ENCODE measurements at regions of chr14 and their contacts with region 1.

Region 1: DNA sequence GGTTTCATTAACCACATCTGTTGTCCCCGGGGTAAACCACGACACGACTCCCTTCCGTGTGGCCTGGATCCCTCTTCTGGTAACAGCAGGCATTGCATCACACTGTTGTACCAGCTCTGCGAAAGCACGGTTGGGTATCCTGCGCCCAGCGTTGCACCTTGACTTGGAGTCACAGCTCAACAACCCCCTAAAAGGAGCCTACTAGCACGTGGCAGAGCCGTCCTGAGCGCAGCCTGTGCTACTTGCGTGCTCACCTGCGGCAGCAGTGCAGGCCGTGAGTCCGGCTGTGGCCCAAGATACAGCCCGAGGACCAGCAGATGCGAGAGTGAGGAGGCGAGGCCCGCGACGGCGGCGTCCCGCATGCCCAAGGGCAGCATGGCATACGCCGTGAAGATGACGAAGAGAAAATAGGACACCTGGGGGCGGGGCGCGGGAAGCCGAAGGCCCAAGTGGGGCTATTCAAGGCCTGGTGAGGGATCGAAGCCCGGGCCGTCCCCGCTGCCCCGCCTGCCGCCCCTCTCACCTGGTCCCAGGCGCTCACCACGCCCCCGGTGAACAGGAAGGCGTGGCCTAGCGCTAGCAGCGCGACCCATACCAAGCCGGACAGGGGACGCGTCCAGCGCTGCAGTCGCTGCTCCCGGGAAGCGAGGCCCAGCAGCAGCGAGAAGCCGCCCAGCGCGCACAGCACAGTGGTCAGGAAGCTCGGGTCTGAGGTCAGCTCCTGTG is 2.4 kb downstream of the ADCY4 start:
- DNase-seq: peak; percentile 82
- H3K4me3 Mint-ChIP-seq: peak overlapping the region; percentile 66
- H3K27ac Mint-ChIP-seq: peak overlapping the region; percentile 3
- H3K4me1 Mint-ChIP-seq: peaks cover 36% of the 10 kb centered on the region
- H3K27me3 Mint-ChIP-seq: peaks cover 27% of the 10 kb centered on the region

Region 2: GRCh38 chr14:24207104-24207551 is 125.3 kb before region 1 on chr14:
- intact Hi-C with region 1: no loop called
- DNase-seq: no peak
- H3K4me3 Mint-ChIP-seq: no peak overlapping the region
- H3K27ac Mint-ChIP-seq: peak overlapping the region; percentile 14
- H3K4me1 Mint-ChIP-seq: peaks cover 17% of the 10 kb centered on the region
- H3K27me3 Mint-ChIP-seq: no peaks in the 10 kb centered on the region

Region 3: DNA sequence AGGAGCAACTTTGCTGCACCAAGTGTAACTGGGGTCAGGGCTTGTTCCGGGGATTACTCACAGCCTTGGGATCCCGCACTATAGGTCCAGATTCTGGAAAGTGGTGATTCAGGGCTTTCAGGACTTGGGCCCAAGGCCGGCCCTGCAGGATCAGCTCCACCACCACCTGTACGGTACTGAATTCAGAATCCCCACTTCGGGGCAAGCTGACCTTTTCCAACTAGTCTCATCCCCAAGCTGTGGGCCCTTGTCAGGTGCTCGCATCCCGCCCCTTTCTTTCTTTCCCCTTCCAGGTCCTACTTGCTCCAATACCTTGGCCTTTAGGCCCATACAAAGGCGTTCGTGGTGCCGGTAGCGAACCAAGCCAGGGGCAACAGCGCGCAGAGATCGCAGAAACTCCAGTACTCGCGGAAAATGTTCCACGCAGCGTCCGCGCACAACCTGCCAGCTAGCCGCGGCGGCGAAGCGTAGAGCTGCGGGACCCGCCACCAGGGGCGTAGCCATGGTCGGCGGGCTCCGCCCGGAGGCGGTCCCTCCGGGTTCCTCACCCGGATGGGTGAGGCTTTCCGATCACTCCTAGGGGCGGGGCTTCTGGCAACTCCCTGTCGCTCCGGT is 90.5 kb before region 1 on chr14:
- intact Hi-C with region 1: loop called (anchors 1 kb)
- DNase-seq: peak; percentile 93
- H3K4me3 Mint-ChIP-seq: peak overlapping the region; percentile 86
- H3K27ac Mint-ChIP-seq: peak overlapping the region; percentile 98
- H3K4me1 Mint-ChIP-seq: peaks cover 46% of the 10 kb centered on the region
- H3K27me3 Mint-ChIP-seq: no peaks in the 10 kb centered on the region

Region 4: GRCh38 chr14:24315807-24316603 is 16.4 kb before region 1 on chr14:
- intact Hi-C with region 1: loop called (anchors 2 kb)
- DNase-seq: no peak
- H3K4me3 Mint-ChIP-seq: no peak overlapping the region
- H3K27ac Mint-ChIP-seq: no peak overlapping the region
- H3K4me1 Mint-ChIP-seq: peaks cover 45% of the 10 kb centered on the region
- H3K27me3 Mint-ChIP-seq: peaks cover 11% of the 10 kb centered on the region

Region 5: DNA sequence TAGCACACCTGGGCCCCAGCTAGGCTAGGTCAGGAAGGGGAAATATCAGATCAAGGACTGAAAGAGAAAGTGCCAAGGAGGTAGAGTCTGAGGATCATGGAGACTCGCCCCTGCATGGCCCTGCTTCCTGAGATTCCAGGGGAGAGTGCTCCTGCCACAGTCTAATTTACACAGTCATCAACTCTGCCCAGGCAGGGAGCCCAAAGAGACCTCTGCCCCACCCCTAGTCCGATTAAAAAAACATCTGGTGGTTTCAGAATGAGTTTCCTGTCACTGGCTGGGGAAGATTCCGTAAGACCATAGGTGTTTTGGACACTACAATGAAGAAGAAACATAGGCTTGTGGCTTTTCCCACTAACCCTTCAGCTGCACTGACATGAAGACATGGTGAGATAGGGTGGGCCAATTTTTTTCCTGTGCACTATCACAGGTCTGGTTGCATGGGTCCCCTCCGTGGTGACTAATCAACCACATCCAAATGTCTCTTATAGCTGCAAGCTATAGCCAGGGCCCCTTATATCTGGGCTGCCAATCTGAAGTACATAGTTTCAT is 333.1 kb after region 1 on chr14:
- intact Hi-C with region 1: loop called (anchors 10 kb)
- DNase-seq: peak; percentile 52
- H3K4me3 Mint-ChIP-seq: peak overlapping the region; percentile 59
- H3K27ac Mint-ChIP-seq: peak overlapping the region; percentile 93
- H3K4me1 Mint-ChIP-seq: peaks cover 85% of the 10 kb centered on the region
- H3K27me3 Mint-ChIP-seq: no peaks in the 10 kb centered on the region

Measured in activated T-helper 2 cell treated with anti-CD3 and anti-CD28 coated beads, Interferon-gamma antibody, Interleukin-2, Interleukin-4, amounts not matched to agents 10 μg/mL and 5 μg/mL and 100 μg/mL, durations not matched to agents 14 hours and 24 hours and 36 hours (primary cell).